ENCODE measurements at regions of chr6 and their contacts with region 1.

Region 1: GRCh38 chr6:41027799-41028628 is 11.0 kb downstream of the UNC5CL start:
- DNase-seq: peak; percentile 77
- H3K4me3 Mint-ChIP-seq: peak overlapping the region; percentile 89
- H3K27ac Mint-ChIP-seq: peak overlapping the region; percentile 85
- H3K4me1 Mint-ChIP-seq: peaks cover 22% of the 10 kb centered on the region
- H3K27me3 Mint-ChIP-seq: no peaks in the 10 kb centered on the region

Region 2: DNA sequence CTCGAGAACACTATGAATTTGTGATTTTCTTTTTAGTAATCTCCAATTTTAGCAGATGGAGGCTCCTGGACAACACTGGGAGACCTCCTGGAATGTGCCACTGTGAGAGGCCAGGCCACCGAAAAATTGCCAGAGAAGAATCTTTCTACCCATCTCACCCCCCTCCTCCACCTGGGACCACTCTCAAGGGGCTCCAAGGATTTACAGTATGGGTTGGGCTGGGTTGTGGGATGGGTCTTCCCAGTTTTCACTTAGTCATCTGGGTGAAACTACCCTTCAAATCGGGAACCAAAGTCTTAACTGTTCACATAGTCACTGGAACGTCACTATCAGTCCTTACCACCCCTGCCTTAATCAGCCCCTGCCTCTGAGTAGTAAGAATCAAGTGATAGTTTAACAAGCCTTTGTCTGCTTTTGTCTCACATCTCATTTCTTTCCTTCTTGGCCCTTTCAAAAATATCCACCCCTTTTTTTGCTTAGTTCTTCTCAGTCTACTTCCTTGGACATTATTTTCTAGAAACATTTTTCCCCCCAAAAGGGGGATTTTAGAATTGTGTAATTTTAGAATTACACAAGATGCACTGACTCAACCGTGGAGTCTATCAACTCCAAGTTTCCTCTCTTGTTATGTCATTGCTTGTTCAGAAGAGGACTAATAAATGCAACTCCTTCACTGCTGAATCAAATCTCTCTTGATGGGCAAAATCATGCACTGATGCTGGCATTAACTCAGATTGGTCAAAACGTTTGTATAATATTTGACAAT is 945.6 kb before region 1 on chr6:
- intact Hi-C with region 1: no loop called
- DNase-seq: no peak
- H3K4me3 Mint-ChIP-seq: no peak overlapping the region
- H3K27ac Mint-ChIP-seq: no peak overlapping the region
- H3K4me1 Mint-ChIP-seq: no peaks in the 10 kb centered on the region
- H3K27me3 Mint-ChIP-seq: peaks cover 4% of the 10 kb centered on the region

Region 3: DNA sequence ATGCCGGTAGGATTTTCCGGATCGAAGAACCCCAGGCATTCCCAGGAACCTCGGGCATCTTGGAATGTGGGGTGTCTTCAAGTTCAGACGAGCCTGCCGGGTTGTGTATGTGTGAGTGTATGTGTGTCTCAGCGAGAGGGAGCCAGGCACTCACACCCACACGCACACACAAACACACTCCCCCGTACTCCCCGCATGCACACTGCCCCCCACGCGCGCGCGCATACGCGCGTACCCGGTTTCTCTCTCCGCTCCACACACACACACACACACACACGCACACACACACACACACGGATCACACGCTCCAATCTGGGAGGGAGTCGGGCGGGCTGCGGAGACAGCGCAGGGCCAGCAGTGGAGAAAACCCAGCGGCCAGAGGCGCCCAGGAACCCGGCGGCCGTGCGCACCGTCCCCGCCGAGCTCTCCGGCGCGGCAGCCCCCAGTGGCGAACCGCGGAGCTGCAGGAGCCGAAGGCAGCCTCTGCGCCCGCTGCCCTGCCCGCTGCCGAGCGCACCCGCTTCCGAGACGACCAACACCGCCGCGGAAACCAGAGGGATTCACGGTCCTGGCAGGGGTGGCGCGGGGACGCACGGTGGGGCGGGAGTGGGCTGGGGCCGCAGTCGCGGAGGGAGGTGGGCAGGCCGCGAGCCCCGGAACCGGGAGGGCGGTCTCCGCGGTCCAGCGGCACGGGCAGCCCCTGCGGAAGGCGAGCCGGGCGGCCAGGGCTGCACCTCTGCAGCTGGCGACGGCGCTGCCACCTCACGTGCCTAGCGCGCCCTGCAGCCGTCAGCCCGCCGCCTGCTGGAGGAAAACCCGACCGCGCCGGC is 440.6 kb before region 1 on chr6 and contains the start of gene LRFN2:
- intact Hi-C with region 1: loop called (anchors 5 kb)
- DNase-seq: peak; percentile 71
- H3K4me3 Mint-ChIP-seq: peak within 1 kb of the TSS; percentile 86
- H3K27ac Mint-ChIP-seq: peak within 1 kb of the TSS; percentile 59
- H3K4me1 Mint-ChIP-seq: peaks cover 24% of the 10 kb centered on the region
- H3K27me3 Mint-ChIP-seq: peaks cover 49% of the 10 kb centered on the region
- total RNA-seq, gene LRFN2: 0.29 TPM in 2 replicates

Region 4: GRCh38 chr6:40962241-40962640 is 65.8 kb before region 1 on chr6:
- intact Hi-C with region 1: loop called (anchors 5 kb)
- DNase-seq: peak; percentile 35
- H3K4me3 Mint-ChIP-seq: peak overlapping the region; percentile 3
- H3K27ac Mint-ChIP-seq: peak overlapping the region; percentile 48
- H3K4me1 Mint-ChIP-seq: peaks cover 20% of the 10 kb centered on the region
- H3K27me3 Mint-ChIP-seq: no peaks in the 10 kb centered on the region

Region 5: DNA sequence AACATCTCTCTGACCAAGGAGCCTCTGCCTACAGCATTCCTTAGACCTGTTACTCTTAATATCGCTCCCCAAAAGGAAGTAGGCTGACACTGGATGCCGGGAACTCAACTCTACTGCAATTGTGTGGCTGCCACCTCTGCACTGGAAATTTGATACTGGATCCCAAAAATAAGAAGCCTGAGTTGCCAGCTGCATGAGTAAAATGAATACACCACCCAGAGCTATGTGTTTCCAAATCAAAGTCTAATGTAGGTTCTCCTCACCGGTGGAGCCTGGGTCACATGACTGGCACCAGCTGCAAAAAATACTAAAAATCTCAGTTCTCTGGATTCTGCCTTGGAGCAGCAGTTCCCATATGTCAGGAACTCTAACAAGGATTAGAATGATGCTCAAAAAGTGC is 25.8 kb before region 1 on chr6:
- intact Hi-C with region 1: loop called (anchors 1 kb)
- DNase-seq: no peak
- H3K4me3 Mint-ChIP-seq: no peak overlapping the region
- H3K27ac Mint-ChIP-seq: no peak overlapping the region
- H3K4me1 Mint-ChIP-seq: no peaks in the 10 kb centered on the region
- H3K27me3 Mint-ChIP-seq: peaks cover 39% of the 10 kb centered on the region

Region 6: GRCh38 chr6:41039060-41039998 is 11.3 kb after region 1 on chr6 and contains the start of gene UNC5CL:
- intact Hi-C with region 1: loop called (anchors 1 kb)
- DNase-seq: peak; percentile 45
- H3K4me3 Mint-ChIP-seq: no peak within 1 kb of the TSS
- H3K27ac Mint-ChIP-seq: peak within 1 kb of the TSS; percentile 3
- H3K4me1 Mint-ChIP-seq: peaks cover 19% of the 10 kb centered on the region
- H3K27me3 Mint-ChIP-seq: peaks cover 7% of the 10 kb centered on the region
- total RNA-seq, gene UNC5CL: 0.93 and 0.99 TPM in 2 replicates

Region 7: GRCh38 chr6:41066867-41067304 is 38.9 kb after region 1 on chr6:
- intact Hi-C with region 1: loop called (anchors 1 kb)
- DNase-seq: peak; percentile 31
- H3K4me3 Mint-ChIP-seq: no peak overlapping the region
- H3K27ac Mint-ChIP-seq: no peak overlapping the region
- H3K4me1 Mint-ChIP-seq: peaks cover 43% of the 10 kb centered on the region
- H3K27me3 Mint-ChIP-seq: no peaks in the 10 kb centered on the region